ENCODE measurements at regions of chr3 and their contacts with region 1.

Region 1: DNA sequence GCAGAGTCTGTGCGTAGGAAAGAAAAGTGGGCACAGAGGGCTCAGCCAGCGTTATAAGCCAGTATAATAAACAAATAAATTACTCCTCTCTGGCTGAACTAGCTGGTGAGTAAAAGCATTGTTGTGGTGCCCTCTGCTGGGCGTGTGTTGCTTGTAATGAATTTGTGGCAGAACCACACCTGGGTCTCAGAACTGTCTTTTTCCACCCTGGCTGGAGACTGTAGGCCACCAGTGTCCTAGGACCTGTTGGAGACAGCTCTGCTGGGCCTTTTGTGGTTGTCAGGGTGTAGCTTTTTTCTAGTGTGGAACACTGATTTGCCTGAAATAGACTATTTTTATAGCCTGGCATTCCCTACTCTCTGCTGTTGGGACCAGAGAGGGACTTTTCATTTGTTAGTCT is 130.5 kb upstream of the EIF1B start:
- DNase-seq: peak; percentile 80
- H3K4me3 ChIP-seq: no peak overlapping the region
- H3K27ac ChIP-seq: no peak overlapping the region
- H3K4me1 ChIP-seq: no peaks in the 10 kb centered on the region
- H3K27me3 ChIP-seq: no peaks in the 10 kb centered on the region
- CTCF ChIP-seq: peak; percentile 68 to 69
- POLR2A ChIP-seq: no peak

Region 2: DNA sequence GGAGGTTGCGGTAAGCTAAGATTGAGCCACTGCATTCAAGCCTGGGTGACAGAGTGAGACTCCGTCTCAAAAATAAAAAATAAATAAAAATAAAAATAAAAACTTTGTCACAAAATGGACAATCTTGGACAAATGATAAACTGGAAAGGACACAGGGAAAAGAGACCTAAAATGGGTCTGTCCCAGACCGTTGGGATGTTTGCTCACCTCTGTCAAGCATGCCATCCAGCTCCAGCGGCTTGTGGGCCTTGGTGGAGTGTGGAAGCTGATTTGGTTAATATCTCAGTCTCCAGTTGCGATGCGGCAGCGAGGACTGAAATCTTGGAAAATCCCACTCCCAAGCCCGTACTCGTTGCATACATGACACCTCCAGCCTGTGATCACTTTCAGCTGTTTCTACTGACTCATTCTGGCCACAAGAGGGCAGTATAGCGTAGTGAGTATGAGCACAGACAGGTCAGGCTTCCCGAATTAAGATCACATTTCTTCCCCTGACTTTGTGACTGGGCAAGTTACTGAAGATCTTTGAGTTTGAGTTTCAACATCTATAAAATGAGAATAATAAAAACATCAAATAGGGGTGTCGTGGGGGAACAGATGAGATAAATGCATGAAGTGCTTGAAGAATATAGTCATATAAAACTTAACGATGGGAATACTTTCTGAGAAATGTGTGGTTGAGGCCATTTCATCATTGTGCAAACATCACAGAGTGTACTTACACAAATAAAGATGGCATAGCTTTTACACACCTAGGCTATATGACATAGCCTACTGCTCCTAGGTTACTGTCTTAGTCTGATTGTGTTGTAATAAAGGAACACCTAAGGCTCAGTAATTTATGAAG is 731.2 kb before region 1 on chr3:
- CTCF ChIA-PET with region 1: interaction called, 25 read pairs
- POLR2A ChIA-PET with region 1: no interaction called
- dilution Hi-C with region 1: no loop called
- intact Hi-C with region 1: loop called (anchors 1 kb)
- DNase-seq: peak; percentile 83
- H3K4me3 ChIP-seq: no peak overlapping the region
- H3K27ac ChIP-seq: no peak overlapping the region
- H3K4me1 ChIP-seq: no peaks in the 10 kb centered on the region
- H3K27me3 ChIP-seq: peaks cover 0 to 2% of the 10 kb centered on the region in 2 experiments
- CTCF ChIP-seq: peak; percentile 76 to 78
- POLR2A ChIP-seq: no peak

Region 3: DNA sequence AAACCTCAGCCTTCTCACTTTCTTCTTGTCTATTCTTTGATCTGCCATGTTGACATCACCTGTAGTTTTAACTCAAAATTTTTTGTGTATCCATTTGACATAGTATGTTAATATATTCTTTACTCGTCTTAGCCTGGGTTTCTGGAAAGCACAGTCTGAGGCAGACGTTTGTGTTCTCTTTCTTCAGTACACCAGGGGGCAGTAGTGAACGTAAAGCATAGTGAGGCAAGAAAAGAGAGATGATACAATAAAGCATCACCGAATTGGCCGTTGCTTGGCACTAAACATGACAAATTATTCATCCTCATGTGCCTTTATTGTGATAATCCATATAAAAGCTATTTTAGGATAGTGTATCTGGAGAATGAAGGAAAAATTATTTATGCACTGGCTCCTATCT is 510.6 kb before region 1 on chr3:
- CTCF ChIA-PET with region 1: interaction called, 10 read pairs
- POLR2A ChIA-PET with region 1: no interaction called
- dilution Hi-C with region 1: no loop called
- intact Hi-C with region 1: loop called (anchors 1 kb)
- DNase-seq: peak; percentile 60
- H3K4me3 ChIP-seq: no peak overlapping the region
- H3K27ac ChIP-seq: no peak overlapping the region
- H3K4me1 ChIP-seq: no peaks in the 10 kb centered on the region
- H3K27me3 ChIP-seq: no peaks in the 10 kb centered on the region
- CTCF ChIP-seq: peak; percentile 67 to 71
- POLR2A ChIP-seq: no peak

Region 4: DNA sequence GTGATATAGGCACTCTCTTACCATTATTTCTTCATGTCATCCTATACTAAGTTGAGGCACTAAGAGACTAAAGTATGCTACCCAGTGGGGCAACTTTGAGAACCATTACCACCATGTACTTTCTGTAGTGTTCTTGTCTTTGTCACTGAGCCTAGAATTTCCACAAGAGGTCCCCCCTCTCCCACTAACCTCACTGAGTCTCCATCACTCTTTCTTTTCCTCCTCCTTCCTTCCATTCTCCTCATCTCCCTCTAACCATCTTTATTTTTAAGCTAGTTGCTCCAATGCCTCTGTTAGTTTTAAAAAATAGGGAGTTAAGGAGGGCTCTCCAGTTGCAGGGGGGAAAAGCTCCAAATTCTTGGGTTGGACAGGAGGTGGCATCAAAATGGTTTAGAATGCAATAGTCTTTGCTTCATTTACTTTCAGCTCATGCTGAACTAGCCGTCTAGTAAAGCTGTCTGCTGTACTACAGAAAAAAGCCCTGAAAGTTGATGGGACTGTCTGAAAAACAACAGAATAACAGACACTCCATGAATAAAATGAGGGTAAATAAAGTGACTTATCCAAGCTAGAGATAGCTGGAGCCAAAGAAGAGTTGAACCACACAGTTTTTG is 454.7 kb before region 1 on chr3:
- CTCF ChIA-PET with region 1: interaction called, 113 read pairs
- POLR2A ChIA-PET with region 1: no interaction called
- dilution Hi-C with region 1: no loop called
- intact Hi-C with region 1: loop called (anchors 1 kb)
- DNase-seq: peak; percentile 58
- H3K4me3 ChIP-seq: no peak overlapping the region
- H3K27ac ChIP-seq: no peak overlapping the region
- H3K4me1 ChIP-seq: no peaks in the 10 kb centered on the region
- H3K27me3 ChIP-seq: no peaks in the 10 kb centered on the region
- CTCF ChIP-seq: peak; percentile 40 to 41
- POLR2A ChIP-seq: no peak

Region 5: DNA sequence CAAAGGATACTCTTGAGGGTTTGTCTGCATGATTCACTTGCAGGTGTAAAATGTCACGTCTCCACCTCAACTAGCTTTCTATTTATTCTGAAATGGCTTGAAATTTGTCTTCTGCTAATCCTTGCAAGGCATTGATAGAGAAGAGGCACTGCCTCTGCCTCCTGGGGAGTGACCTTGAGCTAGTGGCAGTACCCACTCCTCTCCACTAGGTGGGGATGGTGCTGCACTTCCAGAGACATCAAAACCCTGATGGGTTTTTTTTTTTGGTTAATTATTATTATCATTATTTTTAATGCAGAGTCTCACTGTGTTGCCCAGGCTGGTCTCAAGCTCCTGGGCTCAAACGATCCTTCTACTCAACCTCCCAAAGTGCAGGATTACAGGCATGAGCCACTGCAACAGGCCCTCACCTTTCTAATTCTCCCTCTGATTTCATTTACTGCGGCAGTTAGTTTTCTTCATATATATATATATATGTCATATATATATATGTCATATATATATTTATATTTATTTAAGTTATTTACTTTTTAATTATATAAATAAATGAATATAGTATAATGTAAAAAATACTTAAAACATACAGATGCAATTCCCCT is 12.9 kb after region 1 on chr3:
- CTCF ChIA-PET with region 1: interaction called, 15 read pairs
- POLR2A ChIA-PET with region 1: no interaction called
- dilution Hi-C with region 1: no loop called
- intact Hi-C with region 1: no loop called
- DNase-seq: peak; percentile 63
- H3K4me3 ChIP-seq: no peak overlapping the region
- H3K27ac ChIP-seq: no peak overlapping the region
- H3K4me1 ChIP-seq: no peaks in the 10 kb centered on the region
- H3K27me3 ChIP-seq: no peaks in the 10 kb centered on the region
- CTCF ChIP-seq: peak; percentile 76 to 88
- POLR2A ChIP-seq: no peak